BJ (cell line): ENCODE measurements at regions of chr1 and their contacts with region 1.

Region 1: GRCh38 chr1:68470388-68470970 is 20.7 kb upstream of the RPE65 start:
- DNase-seq: no peak
- H3K4me3 ChIP-seq: no peak overlapping the region
- H3K27me3 ChIP-seq: no peaks in the 10 kb centered on the region
- CTCF ChIP-seq: peak; percentile 75

Region 2: GRCh38 chr1:69737527-69738185 is 1267.2 kb after region 1 on chr1:
- CTCF ChIA-PET with region 1: interaction called, 18 read pairs
- POLR2A ChIA-PET with region 1: no interaction called
- DNase-seq: peak; percentile 9
- H3K4me3 ChIP-seq: no peak overlapping the region
- H3K27me3 ChIP-seq: no peaks in the 10 kb centered on the region
- CTCF ChIP-seq: peak; percentile 70